Posterior vena cava (tissue), 2 donors: ENCODE measurements at regions of chr3 and their contacts with region 1.

Region 1: DNA sequence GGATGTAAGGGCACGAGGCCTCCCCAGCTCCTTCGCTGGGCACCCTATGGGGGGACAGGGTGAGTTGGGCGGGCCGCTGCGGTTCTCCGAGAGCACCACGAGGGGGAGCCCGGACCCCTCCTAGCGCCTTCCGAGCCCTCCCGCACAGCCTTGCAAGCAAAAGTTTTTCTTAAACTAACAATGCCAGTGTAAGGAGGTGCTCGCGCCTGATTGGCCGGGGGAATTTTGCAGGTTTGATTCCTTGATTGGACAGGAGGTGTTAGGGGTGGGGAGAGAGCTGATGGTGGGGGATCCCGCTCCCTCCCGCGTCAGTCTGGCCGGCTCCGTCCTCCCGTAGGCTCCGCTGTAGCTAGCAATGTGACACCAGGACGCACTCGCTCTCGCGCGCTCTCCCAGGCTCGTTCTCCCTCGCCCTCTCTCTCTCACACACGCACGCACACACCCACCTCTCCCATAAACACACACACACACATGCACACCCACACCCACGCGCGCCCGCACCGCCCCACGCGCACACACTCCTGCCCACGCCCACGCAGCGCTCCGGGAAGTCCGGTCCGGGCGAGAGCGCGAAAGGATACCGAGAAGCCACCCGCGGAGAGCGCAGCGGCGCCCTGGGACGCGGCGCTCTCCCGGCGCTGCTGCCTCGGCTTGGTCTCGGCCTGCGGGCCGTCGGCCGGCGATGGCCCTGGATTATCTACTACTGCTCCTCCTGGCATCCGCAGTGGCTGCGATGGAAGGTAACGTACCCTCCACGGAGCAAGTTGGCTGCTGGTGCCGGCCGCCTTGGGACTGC is at the start of gene EPHB1:
- DNase-seq: peak; percentile 93
- total RNA-seq, gene EPHB1: 3.7 TPM

Region 2: DNA sequence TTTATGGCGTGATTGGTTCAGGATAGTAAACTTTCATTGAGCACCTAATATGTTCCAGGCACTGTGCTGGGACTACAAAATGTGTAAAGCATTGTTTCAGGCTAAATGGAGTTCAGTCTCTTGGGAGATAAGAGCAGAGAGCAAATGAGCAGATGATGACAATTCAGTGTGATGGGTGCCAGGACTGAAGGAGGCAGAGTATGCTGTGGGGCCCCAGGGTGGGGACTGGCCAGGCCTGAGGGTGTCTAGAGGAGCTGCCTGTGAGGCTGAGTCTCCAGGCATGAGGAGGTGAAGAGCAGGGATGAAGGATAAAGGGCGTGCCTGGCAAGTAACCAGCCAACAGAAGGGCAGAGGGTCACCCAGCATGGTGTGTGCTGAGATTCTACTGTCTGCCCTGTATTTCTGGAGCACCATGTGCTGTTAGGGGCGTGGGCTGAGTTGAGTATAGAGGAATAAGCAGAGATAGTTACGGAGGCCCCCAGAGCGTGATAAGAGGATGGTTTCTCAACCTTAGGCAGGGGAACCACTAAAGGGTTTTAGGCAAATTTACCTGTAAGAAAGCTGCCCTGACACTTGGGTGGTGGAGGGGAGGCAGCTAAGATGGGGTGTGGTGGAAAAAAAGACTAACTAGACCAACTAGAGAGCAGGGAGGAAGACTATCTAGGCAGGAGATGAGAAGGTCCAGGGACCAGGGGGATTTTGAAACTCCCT is 38.5 kb after region 1 on chr3:
- intact Hi-C with region 1: no loop called
- DNase-seq: no peak

Region 3: GRCh38 chr3:135503760-135504686 is 708.9 kb after region 1 on chr3:
- intact Hi-C with region 1: loop called (anchors 10 kb)
- DNase-seq: peak; percentile 88

Region 4: DNA sequence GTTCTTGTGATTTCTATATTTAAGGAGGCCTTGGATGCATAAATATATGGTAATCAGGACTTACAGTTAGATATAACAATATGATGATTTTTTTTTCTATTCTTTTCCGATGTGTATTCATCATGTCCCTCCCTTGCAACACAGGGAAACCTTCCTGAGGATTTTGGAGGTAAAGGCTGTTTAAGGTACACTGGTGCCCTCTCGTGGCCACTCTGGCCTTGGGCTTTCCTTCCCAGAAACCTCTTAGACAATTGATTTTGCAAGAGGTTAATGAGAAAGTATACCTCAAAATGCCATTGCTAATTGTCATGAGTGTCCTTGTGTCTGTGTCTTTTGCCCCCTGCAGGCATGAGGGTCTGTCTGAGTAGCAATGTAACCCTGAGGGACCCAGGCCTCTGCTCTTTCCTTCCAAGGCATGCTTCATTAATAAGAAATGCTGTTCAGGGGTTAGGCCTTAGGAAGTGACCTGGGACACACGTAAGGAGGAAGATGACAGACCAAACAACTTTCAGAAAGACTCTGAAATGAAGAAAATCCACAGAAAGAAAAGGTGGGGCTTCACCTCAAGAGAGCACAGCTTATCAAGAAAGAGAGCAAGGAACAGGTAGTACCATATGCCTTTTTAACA is 1100.1 kb after region 1 on chr3:
- intact Hi-C with region 1: loop called (anchors 5 to 10 kb)
- DNase-seq: peak; percentile 88